MCF 10A (cell line): ENCODE measurements at regions of chr1 and their contacts with region 1.

Region 1: DNA sequence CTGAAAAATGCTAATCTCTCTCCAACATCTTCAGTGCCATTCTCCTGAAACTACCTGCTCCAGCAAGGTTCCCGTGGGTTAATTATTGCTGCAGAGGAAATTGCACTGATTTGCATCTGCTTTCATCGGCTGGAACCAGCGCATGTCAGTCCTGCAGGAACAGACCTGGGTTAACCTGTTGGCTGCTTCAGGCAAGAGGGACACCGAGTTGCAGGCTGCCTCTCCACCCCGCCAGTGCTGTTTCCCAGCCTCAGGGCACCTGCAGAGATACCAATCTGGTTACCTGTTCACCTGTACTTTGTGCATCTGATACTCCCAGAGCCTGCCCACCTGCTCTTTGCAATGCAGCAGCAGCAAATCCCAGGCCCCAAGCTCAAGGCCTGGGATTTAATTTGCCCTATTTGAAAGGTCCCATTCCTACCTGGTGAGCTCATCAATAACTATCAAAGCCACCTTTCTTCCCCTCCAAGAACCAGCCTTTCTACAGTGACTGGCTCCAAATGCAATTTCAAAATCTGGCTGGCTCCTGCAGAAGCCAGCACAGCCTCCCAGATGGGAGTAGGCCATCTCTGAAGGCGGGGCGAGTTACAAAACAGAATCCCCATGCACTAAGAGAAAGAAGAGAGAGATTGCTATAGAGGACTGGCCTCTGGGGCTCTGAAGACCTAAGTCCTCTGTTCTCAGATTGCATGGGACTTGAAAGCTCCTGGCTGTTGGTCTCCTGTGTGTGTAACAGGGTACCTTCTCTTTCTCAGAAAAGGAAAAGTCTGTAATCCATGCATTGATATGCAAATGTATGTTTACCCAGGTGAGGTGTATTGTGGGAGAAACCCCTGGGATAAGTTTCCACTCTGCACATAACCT is 67.8 kb downstream of the TOMM20 start:
- DNase-seq: peak; percentile 76
- H3K4me3 Mint-ChIP-seq: no peak overlapping the region
- H3K27ac Mint-ChIP-seq: no peak overlapping the region
- H3K4me1 Mint-ChIP-seq: peaks cover 38% of the 10 kb centered on the region
- H3K27me3 Mint-ChIP-seq: no peaks in the 10 kb centered on the region
- CTCF ChIP-seq: no peak

Region 2: DNA sequence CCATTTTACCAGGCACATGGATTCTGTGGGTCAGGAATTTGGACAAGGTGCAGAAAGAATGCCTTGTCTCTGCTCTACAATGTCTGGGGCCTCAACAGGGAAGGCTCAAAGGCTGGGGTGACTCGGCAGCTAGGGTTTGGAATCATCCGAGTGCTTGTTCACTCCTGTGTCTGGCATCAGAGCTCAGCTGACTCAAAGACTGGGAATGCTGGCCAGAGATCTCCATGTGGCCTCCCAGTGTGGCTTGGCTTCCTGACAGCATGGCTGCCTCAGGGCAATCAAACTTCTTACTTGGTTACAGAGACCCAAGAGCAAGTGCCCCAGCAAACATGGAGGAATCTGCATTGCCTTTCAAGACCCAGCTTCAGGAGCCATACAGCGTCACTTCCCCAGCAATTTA is 42.7 kb before region 1 on chr1:
- CTCF ChIA-PET with region 1: interaction called, 6 read pairs
- POLR2A ChIA-PET with region 1: interaction called, 16 read pairs
- intact Hi-C with region 1: no loop called
- DNase-seq: peak; percentile 100
- H3K4me3 Mint-ChIP-seq: no peak overlapping the region
- H3K27ac Mint-ChIP-seq: peak overlapping the region; percentile 0
- H3K4me1 Mint-ChIP-seq: peaks cover 25% of the 10 kb centered on the region
- H3K27me3 Mint-ChIP-seq: no peaks in the 10 kb centered on the region
- CTCF ChIP-seq: no peak

Region 3: DNA sequence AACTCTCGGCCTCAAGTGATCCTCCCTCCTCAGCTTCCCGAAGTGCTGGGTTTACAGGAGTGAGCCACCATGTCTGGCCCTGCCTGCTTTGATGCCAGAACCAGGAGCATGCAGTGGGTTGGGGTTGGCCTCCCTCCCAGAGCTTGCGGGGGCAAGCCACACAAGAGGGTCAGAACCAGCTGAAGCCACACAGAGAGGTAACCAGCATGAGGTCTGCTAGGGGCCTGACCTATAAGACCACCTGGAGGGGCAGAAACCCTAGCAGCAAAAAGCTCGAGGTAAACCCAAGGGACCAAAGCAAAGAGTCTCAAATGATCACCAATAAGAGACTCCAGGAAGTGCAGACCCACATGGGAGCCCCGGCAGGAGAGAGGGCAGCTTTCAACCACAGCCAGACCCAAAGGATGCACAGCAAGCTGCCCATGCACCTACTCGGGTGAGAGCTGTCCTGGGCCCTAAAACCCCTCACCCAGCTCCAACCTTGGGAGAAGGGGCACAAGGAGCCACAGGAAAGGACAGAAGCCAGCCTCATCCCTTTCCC is 13.4 kb before region 1 on chr1:
- CTCF ChIA-PET with region 1: interaction called, 14 read pairs
- POLR2A ChIA-PET with region 1: interaction called, 7 read pairs
- intact Hi-C with region 1: no loop called
- DNase-seq: no peak
- H3K4me3 Mint-ChIP-seq: no peak overlapping the region
- H3K27ac Mint-ChIP-seq: peak overlapping the region; percentile 46
- H3K4me1 Mint-ChIP-seq: peaks cover 11% of the 10 kb centered on the region
- H3K27me3 Mint-ChIP-seq: no peaks in the 10 kb centered on the region
- CTCF ChIP-seq: no peak